ENCODE measurements at regions of chr10 and their contacts with region 1.

Region 1: GRCh38 chr10:63832686-63833085 is 311.5 kb downstream of the REEP3 start:
- DNase-seq: no peak
- H3K4me3 Mint-ChIP-seq: no peak overlapping the region
- H3K27ac Mint-ChIP-seq: no peak overlapping the region
- H3K4me1 Mint-ChIP-seq: no peaks in the 10 kb centered on the region
- H3K27me3 Mint-ChIP-seq: peaks cover 12% of the 10 kb centered on the region
- CTCF ChIP-seq: no peak

Region 2: GRCh38 chr10:63819753-63820329 is 12.8 kb before region 1 on chr10:
- CTCF ChIA-PET with region 1: interaction called, 12 read pairs
- POLR2A ChIA-PET with region 1: no interaction called
- intact Hi-C with region 1: no loop called
- DNase-seq: peak; percentile 74
- H3K4me3 Mint-ChIP-seq: no peak overlapping the region
- H3K27ac Mint-ChIP-seq: no peak overlapping the region
- H3K4me1 Mint-ChIP-seq: no peaks in the 10 kb centered on the region
- H3K27me3 Mint-ChIP-seq: peaks cover 11% of the 10 kb centered on the region
- CTCF ChIP-seq: peak; percentile 64

Region 3: DNA sequence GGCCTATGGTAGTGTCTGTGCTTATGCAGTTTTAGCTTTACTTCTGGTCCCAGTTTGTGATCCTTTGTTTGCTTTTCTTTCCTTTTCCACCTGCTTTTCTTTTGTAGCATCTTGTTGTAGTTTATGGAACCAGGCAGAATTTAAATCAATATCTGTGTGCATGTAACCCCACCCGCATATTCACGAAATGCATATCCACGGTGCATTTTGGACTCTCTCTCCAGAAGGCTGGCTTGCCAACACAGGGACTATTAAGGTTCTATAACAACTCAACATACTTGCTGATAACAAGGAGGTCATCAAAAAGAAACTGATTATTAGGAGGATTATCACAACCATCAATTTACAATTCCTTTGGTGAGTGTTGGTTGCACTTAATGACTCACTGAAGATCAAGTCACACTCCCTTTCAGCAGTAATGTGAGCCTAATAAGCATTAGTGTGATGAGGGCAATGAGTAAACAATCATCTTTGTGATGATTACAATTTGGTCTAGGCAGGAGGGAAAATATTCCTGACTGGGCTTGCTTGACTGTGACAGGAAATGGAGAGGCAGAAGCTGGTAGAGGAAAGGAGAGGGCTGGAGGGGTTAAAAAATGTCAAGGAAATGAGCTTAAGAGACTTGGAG is 67.1 kb after region 1 on chr10:
- CTCF ChIA-PET with region 1: no interaction called
- POLR2A ChIA-PET with region 1: no interaction called
- intact Hi-C with region 1: no loop called
- DNase-seq: no peak
- H3K4me3 Mint-ChIP-seq: no peak overlapping the region
- H3K27ac Mint-ChIP-seq: no peak overlapping the region
- H3K4me1 Mint-ChIP-seq: no peaks in the 10 kb centered on the region
- H3K27me3 Mint-ChIP-seq: no peaks in the 10 kb centered on the region
- CTCF ChIP-seq: no peak

Region 4: GRCh38 chr10:63976538-63976937 is 143.9 kb after region 1 on chr10:
- CTCF ChIA-PET with region 1: no interaction called
- POLR2A ChIA-PET with region 1: no interaction called
- intact Hi-C with region 1: no loop called
- DNase-seq: peak; percentile 69
- H3K4me3 Mint-ChIP-seq: no peak overlapping the region
- H3K27ac Mint-ChIP-seq: no peak overlapping the region
- H3K4me1 Mint-ChIP-seq: no peaks in the 10 kb centered on the region
- H3K27me3 Mint-ChIP-seq: no peaks in the 10 kb centered on the region
- CTCF ChIP-seq: peak; percentile 65